Gastrocnemius medialis (tissue), 4 donors: ENCODE measurements at regions of chr6 and their contacts with region 1.

Region 1: DNA sequence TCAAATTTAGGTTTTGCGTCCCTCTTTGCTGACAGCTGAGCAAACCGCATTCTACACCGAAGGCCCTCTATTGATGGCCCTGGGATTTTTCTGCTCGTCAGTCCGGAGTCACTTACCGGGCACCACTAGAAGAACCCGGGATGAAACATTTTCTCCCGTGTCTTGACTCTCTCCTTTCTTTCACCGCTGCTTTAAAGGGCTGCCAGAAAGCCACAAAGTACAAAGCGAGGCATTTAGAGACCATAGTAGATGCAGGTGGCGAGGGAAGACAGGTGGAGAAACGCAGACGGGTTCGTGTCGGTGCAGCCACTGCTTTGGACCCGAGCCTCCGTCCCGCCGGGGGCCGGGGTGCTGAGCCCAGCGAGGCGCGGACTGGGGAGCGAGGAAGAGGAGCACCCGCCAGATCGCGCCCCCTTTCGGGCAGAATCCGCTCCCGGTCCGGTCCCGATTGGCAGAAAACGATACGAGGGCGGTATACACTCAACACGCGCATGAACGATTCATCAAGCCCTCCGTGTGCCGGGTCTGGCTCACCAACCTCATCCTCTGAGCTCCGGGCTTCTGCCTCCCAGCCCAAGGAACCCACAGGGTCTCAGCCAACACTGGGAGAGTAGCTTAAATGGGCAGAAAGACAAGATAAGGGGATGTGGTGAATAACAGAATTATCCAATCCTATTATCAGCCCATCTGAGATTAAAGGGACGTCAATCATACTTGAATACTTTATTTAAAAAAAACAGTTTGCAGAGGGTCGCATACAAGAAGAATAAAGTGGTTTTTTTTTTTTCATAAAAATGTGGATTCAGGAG is 84.9 kb downstream of the TRIM27 start:
- DNase-seq: peak; percentile 20 to 22
- ATAC-seq: peak; percentile 42 to 63
- H3K4me3 ChIP-seq: peak overlapping the region; percentile 46 to 81 (median 55)
- H3K27ac ChIP-seq: peak overlapping the region in 3 of 4 donors; percentile 8 to 51 (median 28)
- H3K4me1 ChIP-seq: peaks cover 0 to 12% of the 10 kb centered on the region in 2 donors
- H3K27me3 ChIP-seq: peaks cover 19 to 40% (median 20%) of the 10 kb centered on the region in 3 donors
- CTCF ChIP-seq: peak in 2 of 5 experiments; percentile 29 to 43
- POLR2A ChIP-seq: no peak

Region 2: GRCh38 chr6:28940858-28941680 is 102.2 kb after region 1 on chr6:
- in situ Hi-C with region 1: no loop called
- intact Hi-C with region 1: loop called (anchors 5 kb)
- DNase-seq: peak; percentile 38 to 51
- ATAC-seq: peak; percentile 69 to 76
- H3K4me3 ChIP-seq: peak overlapping the region; percentile 52 to 61 (median 58)
- H3K27ac ChIP-seq: peak overlapping the region; percentile 57 to 77 (median 72)
- H3K4me1 ChIP-seq: peaks cover 8 to 12% of the 10 kb centered on the region in 2 donors
- H3K27me3 ChIP-seq: peaks cover 3 to 31% (median 16%) of the 10 kb centered on the region in 3 donors
- CTCF ChIP-seq: no peak
- POLR2A ChIP-seq: no peak

Region 3: DNA sequence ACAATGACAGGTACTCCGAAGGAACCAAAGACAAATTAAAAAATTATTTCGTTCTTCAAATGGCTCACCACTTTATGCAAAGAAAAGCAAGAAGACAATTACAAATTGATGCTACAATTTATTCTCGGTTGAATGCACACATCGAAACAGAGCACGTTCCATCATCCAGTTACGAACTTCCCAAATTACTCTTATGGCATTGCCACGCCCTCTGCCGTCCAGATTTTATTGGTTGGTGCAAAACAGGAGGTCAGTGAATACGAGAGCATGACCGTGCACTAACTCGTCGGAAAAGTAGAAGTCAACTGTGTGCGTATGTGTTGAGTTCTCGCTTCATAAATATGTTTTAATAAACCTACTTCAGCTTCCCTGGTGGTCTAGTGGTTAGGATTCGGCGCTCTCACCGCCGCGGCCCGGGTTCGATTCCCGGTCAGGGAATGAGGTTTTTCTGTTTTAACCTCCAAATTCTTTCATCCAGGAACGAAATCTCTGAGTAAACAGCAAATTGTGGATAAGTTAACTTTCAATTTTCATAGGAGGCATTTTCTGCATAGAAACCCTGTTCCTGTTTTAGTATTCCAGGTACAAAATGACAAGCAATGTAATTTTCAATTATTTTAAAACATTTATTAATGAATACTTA is 143.1 kb after region 1 on chr6:
- in situ Hi-C with region 1: no loop called
- intact Hi-C with region 1: loop called (anchors 1 kb)
- DNase-seq: peak; percentile 44 to 74
- ATAC-seq: peak; percentile 80 to 84
- H3K4me3 ChIP-seq: peak overlapping the region; percentile 60 to 70 (median 62)
- H3K27ac ChIP-seq: peak overlapping the region; percentile 57 to 77 (median 66)
- H3K4me1 ChIP-seq: peaks cover 0 to 3% of the 10 kb centered on the region in 2 donors
- H3K27me3 ChIP-seq: peaks cover 3 to 10% (median 9%) of the 10 kb centered on the region in 3 donors
- CTCF ChIP-seq: no peak
- POLR2A ChIP-seq: no peak

Region 4: DNA sequence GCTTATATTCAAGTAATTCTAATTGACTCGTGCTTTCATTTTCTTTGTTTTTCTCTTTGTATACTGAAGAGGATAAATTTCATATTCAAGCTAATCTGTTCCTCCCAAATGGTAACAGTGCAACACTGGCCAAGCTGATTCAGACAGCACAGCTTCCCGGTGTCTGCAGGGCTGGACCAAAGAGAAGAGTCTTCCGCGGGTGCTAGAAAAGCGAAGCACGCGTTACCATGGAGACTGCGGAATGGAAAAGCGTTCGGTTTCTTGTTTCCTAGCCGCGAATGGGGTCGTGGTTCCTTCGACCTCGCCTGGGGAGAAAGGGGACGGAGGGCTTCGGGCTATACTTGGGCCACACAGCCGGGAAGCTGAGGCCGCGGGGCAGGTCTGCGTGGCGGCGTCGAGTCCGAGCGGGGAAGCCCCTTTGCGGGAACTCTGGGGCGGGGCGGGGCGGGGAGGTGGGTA is 172.5 kb after region 1 on chr6:
- in situ Hi-C with region 1: loop called (anchors 5 to 10 kb)
- intact Hi-C with region 1: no loop called
- DNase-seq: no peak
- ATAC-seq: no peak
- H3K4me3 ChIP-seq: peak overlapping the region; percentile 38 to 46 (median 43)
- H3K27ac ChIP-seq: no peak overlapping the region
- H3K4me1 ChIP-seq: peaks cover 0 to 1% of the 10 kb centered on the region in 2 donors
- H3K27me3 ChIP-seq: peaks cover 35 to 57% (median 52%) of the 10 kb centered on the region in 3 donors
- CTCF ChIP-seq: no peak
- POLR2A ChIP-seq: no peak

Region 5: GRCh38 chr6:29016559-29017427 is 178.0 kb after region 1 on chr6:
- in situ Hi-C with region 1: loop called (anchors 5 to 10 kb)
- intact Hi-C with region 1: loop called (anchors 1 kb)
- DNase-seq: peak; percentile 29 to 59
- ATAC-seq: peak; percentile 79 to 81
- H3K4me3 ChIP-seq: peak overlapping the region; percentile 40 to 56 (median 46)
- H3K27ac ChIP-seq: no peak overlapping the region
- H3K4me1 ChIP-seq: peaks cover 0 to 9% of the 10 kb centered on the region in 2 donors
- H3K27me3 ChIP-seq: peaks cover 34 to 49% (median 40%) of the 10 kb centered on the region in 3 donors
- CTCF ChIP-seq: peak; percentile 49 to 83 (median 79)
- POLR2A ChIP-seq: no peak

Region 6: GRCh38 chr6:29294499-29294914 is 455.7 kb after region 1 on chr6:
- in situ Hi-C with region 1: no loop called
- intact Hi-C with region 1: no loop called
- DNase-seq: no peak
- ATAC-seq: no peak
- H3K4me3 ChIP-seq: no peak overlapping the region
- H3K27ac ChIP-seq: no peak overlapping the region
- H3K4me1 ChIP-seq: no peaks in the 10 kb centered on the region
- H3K27me3 ChIP-seq: no peaks in the 10 kb centered on the region
- CTCF ChIP-seq: no peak
- POLR2A ChIP-seq: no peak

Region 7: GRCh38 chr6:29516108-29516507 is 677.3 kb after region 1 on chr6:
- in situ Hi-C with region 1: no loop called
- intact Hi-C with region 1: no loop called
- DNase-seq: no peak
- ATAC-seq: no peak
- H3K4me3 ChIP-seq: no peak overlapping the region
- H3K27ac ChIP-seq: no peak overlapping the region
- H3K4me1 ChIP-seq: no peaks in the 10 kb centered on the region
- H3K27me3 ChIP-seq: no peaks in the 10 kb centered on the region
- CTCF ChIP-seq: no peak
- POLR2A ChIP-seq: no peak